ENCODE measurements at regions of chr12 and their contacts with region 1.

Region 1: GRCh38 chr12:104339663-104340062 is 36.1 kb downstream of the EID3 start:
- H3K4me3 Mint-ChIP-seq: no peak overlapping the region
- H3K27ac Mint-ChIP-seq: no peak overlapping the region
- H3K4me1 Mint-ChIP-seq: peaks cover 5% of the 10 kb centered on the region
- H3K27me3 Mint-ChIP-seq: no peaks in the 10 kb centered on the region

Region 2: DNA sequence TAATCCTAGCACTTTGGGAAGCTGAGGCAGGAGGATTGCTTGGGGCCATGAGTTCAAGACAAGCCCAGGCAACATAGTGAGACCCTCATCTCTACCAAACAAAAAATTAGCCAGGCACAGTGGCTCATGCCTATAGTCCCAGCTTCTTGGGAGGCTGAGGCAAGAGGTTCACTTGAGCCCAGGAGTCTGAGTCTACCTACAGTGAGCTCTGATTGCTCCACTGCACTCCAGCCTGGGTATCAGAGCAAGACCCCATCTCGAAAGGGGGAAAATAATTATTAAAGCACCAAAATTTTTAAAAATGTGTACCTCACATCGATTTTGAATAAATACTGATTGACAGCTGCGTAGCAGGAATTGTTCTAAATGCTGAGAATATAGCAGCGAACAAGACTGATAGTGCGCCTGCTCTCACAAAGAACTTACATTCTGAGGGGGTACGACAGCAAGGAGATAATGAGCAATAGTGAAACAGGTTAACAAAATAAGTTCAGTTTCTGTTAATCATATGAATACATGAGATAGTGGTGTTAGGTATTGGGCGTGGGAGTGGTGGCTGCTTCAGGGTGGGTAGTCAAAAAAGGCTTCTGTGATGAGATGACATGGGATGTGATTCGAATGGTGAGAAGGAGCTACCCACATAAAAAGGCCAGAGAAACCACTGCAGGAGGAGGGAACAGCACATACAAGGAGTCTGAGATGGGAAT is 255.7 kb before region 1 on chr12:
- intact Hi-C with region 1: loop called (anchors 10 kb)
- H3K4me3 Mint-ChIP-seq: no peak overlapping the region
- H3K27ac Mint-ChIP-seq: no peak overlapping the region
- H3K4me1 Mint-ChIP-seq: peaks cover 5% of the 10 kb centered on the region
- H3K27me3 Mint-ChIP-seq: no peaks in the 10 kb centered on the region

Region 3: GRCh38 chr12:104381731-104382480 is 42.2 kb after region 1 on chr12:
- intact Hi-C with region 1: no loop called
- H3K4me3 Mint-ChIP-seq: no peak overlapping the region
- H3K27ac Mint-ChIP-seq: peak overlapping the region; percentile 44
- H3K4me1 Mint-ChIP-seq: peaks cover 11% of the 10 kb centered on the region
- H3K27me3 Mint-ChIP-seq: peaks cover 6% of the 10 kb centered on the region

Measured in dendritic cell treated with granulocyte-macrophage colony-stimulating factor and Interleukin-4, amounts not matched to agents 40 ng/mL and 50 ng/mL, for 4 days (primary cell).